Activated CD4-positive, alpha-beta memory T cell treated with anti-CD3 and anti-CD28 coated beads for 36 hours (primary cell): ENCODE measurements at regions of chr17 and their contacts with region 1.

Region 1: GRCh38 chr17:66508896-66509843 is 206.8 kb downstream of the PRKCA start:
- DNase-seq: peak; percentile 82
- H3K4me3 Mint-ChIP-seq: peak overlapping the region; percentile 54
- H3K27ac Mint-ChIP-seq: peak overlapping the region; percentile 91
- H3K4me1 Mint-ChIP-seq: peaks cover 76% of the 10 kb centered on the region
- H3K27me3 Mint-ChIP-seq: no peaks in the 10 kb centered on the region

Region 2: GRCh38 chr17:66549731-66550207 is 40.6 kb after region 1 on chr17:
- CTCF ChIA-PET with region 1: interaction called, 3 read pairs
- POLR2A ChIA-PET with region 1: interaction called, 3 read pairs
- intact Hi-C with region 1: loop called (anchors 1 kb)
- DNase-seq: no peak
- H3K4me3 Mint-ChIP-seq: no peak overlapping the region
- H3K27ac Mint-ChIP-seq: no peak overlapping the region
- H3K4me1 Mint-ChIP-seq: peaks cover 56% of the 10 kb centered on the region
- H3K27me3 Mint-ChIP-seq: no peaks in the 10 kb centered on the region